ENCODE measurements at regions of chr4 and their contacts with region 1.

Region 1: GRCh38 chr4:162497564-162498167 is 333.9 kb upstream of the FSTL5 start:
- DNase-seq: no peak
- H3K4me3 ChIP-seq: no peak overlapping the region
- H3K27ac ChIP-seq: no peak overlapping the region
- H3K4me1 ChIP-seq: no peaks in the 10 kb centered on the region
- H3K27me3 ChIP-seq: no peaks in the 10 kb centered on the region
- CTCF ChIP-seq: peak; percentile 74 to 94 (median 81)
- POLR2A ChIP-seq: no peak

Region 2: GRCh38 chr4:163332500-163333406 is 835.1 kb after region 1 on chr4 and contains the start of gene NPY1R:
- intact Hi-C with region 1: loop called (anchors 5 kb)
- DNase-seq: peak; percentile 68
- H3K4me3 ChIP-seq: peak within 1 kb of the TSS; percentile 35 to 47
- H3K27ac ChIP-seq: no peak within 1 kb of the TSS
- H3K4me1 ChIP-seq: no peaks in the 10 kb centered on the region
- H3K27me3 ChIP-seq: no peaks in the 10 kb centered on the region
- CTCF ChIP-seq: peak; percentile 28 to 69 (median 60)
- POLR2A ChIP-seq: no peak
- total RNA-seq, gene NPY1R: 1.4 to 9.5 TPM

Region 3: GRCh38 chr4:163544407-163545038 is 1046.9 kb after region 1 on chr4:
- intact Hi-C with region 1: loop called (anchors 5 kb)
- DNase-seq: peak; percentile 25
- H3K4me3 ChIP-seq: peak overlapping the region in 1 of 2 donors; percentile 16
- H3K27ac ChIP-seq: no peak overlapping the region
- H3K4me1 ChIP-seq: no peaks in the 10 kb centered on the region
- H3K27me3 ChIP-seq: no peaks in the 10 kb centered on the region
- CTCF ChIP-seq: peak; percentile 56 to 71 (median 65)
- POLR2A ChIP-seq: no peak

Measured in prostate gland (tissue), 2 donors.